ENCODE measurements at regions of chr18 and their contacts with region 1.

Region 1: DNA sequence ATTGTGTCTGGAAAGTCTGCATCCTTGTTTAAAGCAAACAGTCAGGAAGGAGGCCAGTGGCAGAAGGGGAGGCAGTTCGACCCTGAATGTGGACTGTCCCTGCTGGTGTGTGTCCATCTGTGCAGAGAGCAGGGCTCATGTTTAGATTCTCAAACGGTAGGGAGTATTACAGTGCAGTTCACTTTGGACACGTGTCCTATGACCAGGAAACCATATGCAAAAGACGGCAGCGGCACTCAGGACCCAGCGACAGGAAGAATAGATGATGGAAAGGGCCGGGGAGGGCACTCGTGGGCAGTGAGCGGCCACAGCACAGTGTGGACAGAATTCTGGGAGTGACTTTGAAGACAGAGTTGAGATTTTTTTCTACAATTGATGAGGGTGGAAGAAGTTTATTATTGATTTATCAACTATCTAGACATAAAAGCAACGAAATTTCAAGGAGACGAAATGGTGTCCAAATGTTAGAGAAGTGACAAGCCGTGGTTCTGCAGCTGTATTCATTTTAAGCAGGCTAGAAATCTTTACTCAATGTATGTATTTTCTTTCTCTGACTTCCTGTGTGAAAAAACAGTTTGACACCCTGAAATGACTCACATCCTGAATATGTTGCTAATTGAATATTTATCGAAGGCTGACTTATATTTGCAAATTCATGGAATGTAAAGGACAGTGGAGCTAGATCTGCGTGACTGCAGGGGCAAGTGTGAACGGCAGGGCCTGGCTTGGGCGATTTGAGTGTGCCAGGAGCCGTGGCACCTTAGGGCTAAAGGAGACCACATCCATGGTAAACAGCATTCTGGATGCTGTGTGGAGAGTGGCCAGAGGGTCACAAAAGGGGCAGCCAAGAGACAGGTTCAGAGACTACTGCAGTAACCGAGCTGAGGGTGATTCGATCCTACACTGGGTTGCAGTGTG is 214.2 kb downstream of the PTGR3 start:
- DNase-seq: peak; percentile 55
- H3K4me3 Mint-ChIP-seq: peak overlapping the region; percentile 71
- H3K27ac Mint-ChIP-seq: peak overlapping the region; percentile 99
- H3K4me1 Mint-ChIP-seq: peaks cover 60% of the 10 kb centered on the region
- H3K27me3 Mint-ChIP-seq: no peaks in the 10 kb centered on the region

Region 2: GRCh38 chr18:74972354-74972753 is 22.4 kb before region 1 on chr18:
- CTCF ChIA-PET with region 1: no interaction called
- POLR2A ChIA-PET with region 1: no interaction called
- DNase-seq: no peak
- H3K4me3 Mint-ChIP-seq: no peak overlapping the region
- H3K27ac Mint-ChIP-seq: no peak overlapping the region
- H3K4me1 Mint-ChIP-seq: no peaks in the 10 kb centered on the region
- H3K27me3 Mint-ChIP-seq: no peaks in the 10 kb centered on the region

Region 3: GRCh38 chr18:75070625-75071483 is 76.1 kb after region 1 on chr18:
- CTCF ChIA-PET with region 1: interaction called, 7 read pairs
- POLR2A ChIA-PET with region 1: interaction called, 13 read pairs
- DNase-seq: peak; percentile 82
- H3K4me3 Mint-ChIP-seq: peak overlapping the region; percentile 81
- H3K27ac Mint-ChIP-seq: peak overlapping the region; percentile 100
- H3K4me1 Mint-ChIP-seq: peaks cover 37% of the 10 kb centered on the region
- H3K27me3 Mint-ChIP-seq: no peaks in the 10 kb centered on the region